HepG2 (cell line): ENCODE measurements at regions of chr20 and their contacts with region 1.

Region 1: DNA sequence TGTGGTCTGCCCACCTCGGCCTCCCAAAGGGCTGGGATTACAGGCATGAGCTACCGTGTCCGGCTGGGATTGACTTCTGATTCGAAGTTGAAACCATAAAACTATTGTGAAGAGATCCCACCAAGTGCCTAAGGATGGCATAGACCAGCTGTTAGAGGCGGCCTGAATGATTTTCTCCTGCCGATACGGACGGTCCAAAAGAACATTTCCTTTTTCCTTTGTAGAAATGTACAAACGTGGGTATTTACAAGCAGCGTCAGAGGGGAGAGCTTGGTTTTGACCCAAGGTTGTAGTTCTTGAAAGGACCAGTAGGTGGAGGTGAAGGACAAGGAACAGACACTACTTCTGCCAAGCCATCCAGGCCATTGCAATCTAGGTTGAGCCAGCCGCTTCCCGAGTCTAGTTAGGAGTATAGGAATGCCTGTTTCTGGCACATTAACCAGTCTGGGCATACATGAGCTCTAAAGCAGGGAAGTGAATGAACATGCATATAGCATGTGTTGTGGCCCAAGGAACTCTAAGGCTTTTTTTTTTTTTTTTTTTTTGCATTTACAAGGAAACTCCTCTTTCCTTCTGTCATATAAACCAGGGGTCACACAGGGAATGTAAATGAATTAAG is 29.1 kb downstream of the MOCS3 start:
- DNase-seq: peak; percentile 89
- ATAC-seq: peak; percentile 90
- H3K4me3 ChIP-seq: no peak overlapping the region
- H3K27ac ChIP-seq: no peak overlapping the region
- H3K4me1 ChIP-seq: peaks cover 35% of the 10 kb centered on the region
- H3K27me3 ChIP-seq: peaks cover 0 to 12% of the 10 kb centered on the region in 2 experiments; a peak in 3 of 5 replicates
- CTCF ChIP-seq: peak; percentile 98
- EP300 ChIP-seq: no peak
- POLR2A ChIP-seq: no peak
- RAD21 ChIP-seq: peak; percentile 92

Region 2: DNA sequence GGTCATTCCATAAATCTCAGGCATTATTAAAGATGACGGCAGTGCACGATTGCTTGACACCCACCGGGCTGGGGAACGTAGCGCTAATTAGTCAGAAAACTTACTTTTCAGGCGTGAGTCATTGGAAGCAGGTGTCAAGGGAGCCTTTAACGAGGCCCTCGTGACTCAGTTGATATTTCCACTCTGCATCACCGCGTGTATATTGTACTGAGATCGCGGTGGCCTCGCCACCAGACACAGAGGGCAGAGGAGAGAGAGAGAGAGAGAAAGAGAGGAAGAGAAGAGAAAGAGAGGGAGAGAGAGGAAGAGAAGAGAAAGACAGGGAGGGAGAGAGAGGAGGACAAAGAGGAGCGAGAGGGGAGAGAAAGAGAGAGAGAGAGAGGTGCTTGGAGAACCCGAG is 14.1 kb after region 1 on chr20:
- CTCF ChIA-PET with region 1: no interaction called
- POLR2A ChIA-PET with region 1: no interaction called
- in situ Hi-C with region 1: no loop called
- intact Hi-C with region 1: no loop called
- DNase-seq: no peak
- ATAC-seq: no peak
- H3K4me3 ChIP-seq: no peak overlapping the region
- H3K27ac ChIP-seq: no peak overlapping the region
- H3K4me1 ChIP-seq: no peaks in the 10 kb centered on the region
- H3K27me3 ChIP-seq: peaks cover 9 to 71% of the 10 kb centered on the region in 2 experiments
- CTCF ChIP-seq: no peak
- EP300 ChIP-seq: no peak
- POLR2A ChIP-seq: no peak
- RAD21 ChIP-seq: no peak

Region 3: DNA sequence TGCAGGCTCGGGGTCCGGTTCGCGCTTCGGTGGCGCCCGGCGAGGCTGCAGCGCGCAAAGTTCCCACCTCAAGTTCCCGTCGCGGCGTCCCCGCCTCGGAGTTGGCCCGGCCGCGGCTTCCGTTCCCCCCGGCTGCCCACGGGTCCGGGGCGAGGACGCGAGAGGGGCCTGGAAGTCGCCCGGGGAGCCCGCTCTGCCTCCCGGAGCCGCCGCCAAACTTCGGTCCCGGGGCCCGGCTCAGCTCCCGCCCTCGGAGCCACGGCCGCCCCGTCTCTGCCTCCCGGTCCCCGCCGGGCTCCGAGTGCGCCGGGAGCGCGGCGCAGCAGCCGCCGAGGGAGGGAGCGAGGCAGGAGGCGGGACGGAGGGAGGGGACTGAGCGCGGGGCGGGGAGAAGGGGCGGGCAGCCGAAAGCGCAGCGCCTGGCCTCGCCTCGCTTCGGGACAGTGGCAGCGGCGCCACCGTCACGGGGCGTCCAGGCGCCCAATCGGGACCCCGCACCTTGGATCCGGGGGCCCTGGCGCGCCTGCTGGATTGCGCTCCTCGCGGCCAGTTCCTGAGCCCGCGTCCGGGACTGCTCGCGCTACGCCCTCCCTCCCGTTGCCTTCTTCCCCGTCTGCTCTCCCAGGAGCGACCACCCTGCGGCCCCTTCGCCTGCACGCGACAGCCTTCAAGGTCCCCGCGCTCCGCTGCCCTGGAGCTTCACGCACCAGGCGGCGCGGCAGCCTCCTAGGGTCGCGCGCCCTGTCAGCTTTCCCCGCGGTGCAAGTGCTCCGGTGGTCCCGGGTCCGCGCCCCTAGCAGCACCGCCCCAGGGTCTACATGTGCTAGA is 35.3 kb after region 1 on chr20 and contains the start of gene KCNG1:
- CTCF ChIA-PET with region 1: no interaction called
- POLR2A ChIA-PET with region 1: no interaction called
- in situ Hi-C with region 1: no loop called
- intact Hi-C with region 1: no loop called
- DNase-seq: no peak
- ATAC-seq: peak; percentile 77
- H3K4me3 ChIP-seq: peak within 1 kb of the TSS in 1 of 3 experiments; percentile 32; a peak in 1 of 6 replicates
- H3K27ac ChIP-seq: no peak within 1 kb of the TSS
- H3K4me1 ChIP-seq: no peaks in the 10 kb centered on the region
- H3K27me3 ChIP-seq: peaks cover 23 to 81% of the 10 kb centered on the region in 2 experiments
- CTCF ChIP-seq: no peak
- EP300 ChIP-seq: no peak
- POLR2A ChIP-seq: no peak
- RAD21 ChIP-seq: no peak
- total RNA-seq, gene KCNG1: not detected in 2 replicates

Region 4: GRCh38 chr20:51220293-51220706 is 232.6 kb after region 1 on chr20:
- CTCF ChIA-PET with region 1: no interaction called
- POLR2A ChIA-PET with region 1: no interaction called
- in situ Hi-C with region 1: no loop called
- intact Hi-C with region 1: loop called (anchors 1 kb)
- DNase-seq: peak; percentile 23
- ATAC-seq: peak; percentile 92
- H3K4me3 ChIP-seq: no peak overlapping the region
- H3K27ac ChIP-seq: no peak overlapping the region
- H3K4me1 ChIP-seq: no peaks in the 10 kb centered on the region
- H3K27me3 ChIP-seq: peaks cover 6 to 20% of the 10 kb centered on the region in 2 experiments; a peak in 4 of 5 replicates
- CTCF ChIP-seq: peak; percentile 93
- EP300 ChIP-seq: no peak
- POLR2A ChIP-seq: no peak
- RAD21 ChIP-seq: peak; percentile 76

Region 5: DNA sequence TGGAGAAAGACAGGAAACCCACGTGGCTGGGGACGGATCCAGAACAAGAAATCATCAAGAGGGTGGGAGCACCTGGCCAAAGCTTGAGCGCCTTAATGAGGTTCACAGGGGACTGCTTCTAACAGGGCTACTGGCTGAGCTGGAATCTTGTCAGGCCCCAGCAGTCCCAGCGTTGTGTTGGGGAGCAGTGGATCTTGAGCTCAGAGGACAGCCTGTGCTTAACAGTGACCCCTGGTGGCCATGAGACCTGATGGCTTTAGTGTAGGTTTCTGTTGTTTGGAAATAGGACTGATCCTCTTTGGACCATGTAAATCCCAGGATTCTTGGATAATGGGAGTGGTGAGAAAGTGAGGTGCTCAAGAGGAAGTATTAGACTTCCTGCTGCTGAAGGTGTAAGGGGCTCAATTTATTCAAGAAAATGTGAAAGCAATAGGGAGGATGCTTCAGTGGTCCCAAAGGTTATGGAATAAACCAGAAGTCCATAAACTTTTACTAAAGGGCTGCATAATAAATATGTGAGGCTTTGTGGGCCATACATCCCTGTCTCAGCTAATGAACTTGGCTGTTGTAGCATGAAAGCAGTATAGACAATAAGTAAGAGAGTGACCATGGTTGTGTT is 338.6 kb after region 1 on chr20:
- CTCF ChIA-PET with region 1: interaction called, 40 read pairs
- POLR2A ChIA-PET with region 1: interaction called, 5 read pairs
- in situ Hi-C with region 1: no loop called
- intact Hi-C with region 1: loop called (anchors 1 kb)
- DNase-seq: peak; percentile 61
- ATAC-seq: peak; percentile 89
- H3K4me3 ChIP-seq: no peak overlapping the region
- H3K27ac ChIP-seq: no peak overlapping the region
- H3K4me1 ChIP-seq: no peaks in the 10 kb centered on the region
- H3K27me3 ChIP-seq: peaks cover 3 to 38% of the 10 kb centered on the region in 2 experiments; a peak in 3 of 5 replicates
- CTCF ChIP-seq: peak; percentile 86
- EP300 ChIP-seq: no peak
- POLR2A ChIP-seq: no peak
- RAD21 ChIP-seq: peak; percentile 67

Region 6: GRCh38 chr20:51595058-51595532 is 607.4 kb after region 1 on chr20:
- CTCF ChIA-PET with region 1: interaction called, 4 read pairs
- POLR2A ChIA-PET with region 1: no interaction called
- in situ Hi-C with region 1: loop called (anchors 25 kb)
- intact Hi-C with region 1: loop called (anchors 10 kb)
- DNase-seq: peak; percentile 88
- ATAC-seq: peak; percentile 98
- H3K4me3 ChIP-seq: no peak overlapping the region
- H3K27ac ChIP-seq: no peak overlapping the region
- H3K4me1 ChIP-seq: peaks cover 13% of the 10 kb centered on the region
- H3K27me3 ChIP-seq: no peaks in the 10 kb centered on the region
- CTCF ChIP-seq: peak; percentile 99
- EP300 ChIP-seq: no peak
- POLR2A ChIP-seq: no peak
- RAD21 ChIP-seq: peak; percentile 98

Region 7: DNA sequence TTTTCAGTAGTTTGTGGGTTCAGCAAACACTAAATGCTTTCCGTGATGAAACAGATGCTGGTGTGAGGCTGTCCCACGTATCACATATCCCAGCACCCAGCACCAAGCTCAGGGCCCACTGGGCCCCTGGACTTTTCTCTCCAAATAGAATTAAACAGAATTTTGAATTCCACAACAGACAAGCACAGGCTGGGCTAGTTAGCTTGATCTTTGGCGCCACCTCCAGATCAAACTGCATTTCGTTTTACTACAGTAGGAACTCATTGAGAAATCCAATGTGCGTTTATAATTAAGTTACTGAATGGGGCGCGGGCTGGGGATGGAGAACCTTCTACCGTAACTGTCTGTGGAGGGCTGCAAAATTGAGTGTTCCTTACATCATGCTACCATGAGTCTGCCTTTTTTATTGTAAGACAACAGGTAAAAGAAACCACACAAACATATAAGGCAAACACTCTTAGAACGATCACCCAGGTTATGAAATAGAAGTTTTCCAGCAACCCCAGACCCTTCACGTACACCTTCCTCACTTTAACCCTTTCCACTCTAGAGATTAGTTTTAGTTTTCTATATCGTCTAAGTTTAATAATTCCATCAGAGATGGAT is 1096.0 kb after region 1 on chr20:
- CTCF ChIA-PET with region 1: no interaction called
- POLR2A ChIA-PET with region 1: no interaction called
- in situ Hi-C with region 1: loop called (anchors 25 kb)
- intact Hi-C with region 1: no loop called
- DNase-seq: peak; percentile 73
- ATAC-seq: peak; percentile 90
- H3K4me3 ChIP-seq: no peak overlapping the region
- H3K27ac ChIP-seq: no peak overlapping the region
- H3K4me1 ChIP-seq: peaks cover 12% of the 10 kb centered on the region; the same call in 1 of the 2 replicates
- H3K27me3 ChIP-seq: no peaks in the 10 kb centered on the region
- CTCF ChIP-seq: peak; percentile 95
- EP300 ChIP-seq: no peak
- POLR2A ChIP-seq: no peak
- RAD21 ChIP-seq: peak; percentile 94